Naive thymus-derived CD8-positive, alpha-beta T cell (primary cell): ENCODE measurements at regions of chr17 and their contacts with region 1.

Region 1: DNA sequence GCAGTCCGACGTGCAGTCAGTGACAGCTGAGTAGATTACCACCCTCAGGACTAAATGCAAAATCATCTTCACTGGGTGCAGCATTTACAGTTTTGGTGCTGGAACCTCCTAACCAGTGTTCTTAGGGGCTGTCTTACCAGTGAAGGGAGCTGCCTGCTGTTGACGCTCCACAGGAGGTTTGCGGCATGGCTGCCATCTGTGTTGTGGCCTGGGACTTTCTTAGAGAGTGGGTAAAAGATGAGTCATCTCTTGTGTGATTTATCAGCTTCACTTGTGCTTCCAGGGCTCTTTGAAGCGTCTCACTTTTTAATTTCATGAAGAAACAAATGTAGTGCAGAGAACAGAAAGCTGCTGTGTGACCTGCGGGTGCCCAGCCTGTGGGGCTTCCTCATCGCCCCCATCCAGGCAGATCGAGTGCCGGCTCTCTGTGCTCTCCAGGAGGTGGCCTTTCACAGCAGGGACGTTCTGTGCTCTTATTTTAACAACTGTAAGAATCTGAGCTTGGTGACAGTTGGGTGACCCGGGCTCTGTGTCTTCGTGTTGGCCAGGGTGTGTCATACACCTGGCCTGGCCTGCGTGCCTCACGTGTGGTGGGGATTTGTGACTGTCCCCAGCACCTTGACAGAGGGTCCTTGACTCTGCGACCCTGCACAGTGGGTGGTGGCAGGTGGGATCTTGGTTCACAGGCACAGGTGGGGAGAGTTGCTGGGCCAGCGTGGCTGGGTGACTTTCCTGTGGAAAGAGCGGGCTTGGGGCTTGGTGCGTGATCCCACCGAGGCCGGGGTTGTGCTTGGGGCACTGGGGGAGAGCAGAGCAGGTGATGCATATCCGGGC is 24.3 kb upstream of the ZNF750 start:
- DNase-seq: peak; percentile 62 to 97 (median 90)
- ATAC-seq: peak; percentile 92 to 95
- H3K4me3 Mint-ChIP-seq: peak overlapping the region; percentile 75 to 94 (median 83)
- H3K27ac Mint-ChIP-seq: peak overlapping the region; percentile 91 to 98 (median 96)
- H3K4me1 Mint-ChIP-seq: peaks cover 34 to 81% (median 65%) of the 10 kb centered on the region in 4 donors
- H3K27me3 Mint-ChIP-seq: no peaks in the 10 kb centered on the region

Region 2: GRCh38 chr17:82836823-82837357 is 27.3 kb before region 1 on chr17:
- POLR2A ChIA-PET with region 1: interaction called, 15 read pairs
- DNase-seq: peak in 1 of 10 donors; percentile 37
- ATAC-seq: no peak
- H3K4me3 Mint-ChIP-seq: no peak overlapping the region
- H3K27ac Mint-ChIP-seq: peak overlapping the region in 3 of 10 donors; percentile 4 to 82 (median 71)
- H3K4me1 Mint-ChIP-seq: peaks cover 0 to 16% (median 4%) of the 10 kb centered on the region in 4 donors
- H3K27me3 Mint-ChIP-seq: no peaks in the 10 kb centered on the region

Region 3: GRCh38 chr17:82876602-82877379 is 12.6 kb after region 1 on chr17:
- POLR2A ChIA-PET with region 1: interaction called, 84 read pairs
- DNase-seq: no peak
- ATAC-seq: no peak
- H3K4me3 Mint-ChIP-seq: no peak overlapping the region
- H3K27ac Mint-ChIP-seq: peak overlapping the region in 3 of 10 donors; percentile 29 to 60 (median 38)
- H3K4me1 Mint-ChIP-seq: peaks cover 22 to 64% (median 30%) of the 10 kb centered on the region in 4 donors
- H3K27me3 Mint-ChIP-seq: peaks cover 0 to 2% (median 0%) of the 10 kb centered on the region in 5 donors

Region 4: GRCh38 chr17:82881900-82882714 is 17.9 kb after region 1 on chr17:
- POLR2A ChIA-PET with region 1: interaction called, 84 read pairs
- DNase-seq: no peak
- ATAC-seq: no peak
- H3K4me3 Mint-ChIP-seq: peak overlapping the region; percentile 64 to 93 (median 86)
- H3K27ac Mint-ChIP-seq: peak overlapping the region; percentile 96 to 100 (median 99)
- H3K4me1 Mint-ChIP-seq: peaks cover 46 to 87% (median 78%) of the 10 kb centered on the region in 4 donors
- H3K27me3 Mint-ChIP-seq: peaks cover 0 to 2% (median 0%) of the 10 kb centered on the region in 5 donors

Region 5: DNA sequence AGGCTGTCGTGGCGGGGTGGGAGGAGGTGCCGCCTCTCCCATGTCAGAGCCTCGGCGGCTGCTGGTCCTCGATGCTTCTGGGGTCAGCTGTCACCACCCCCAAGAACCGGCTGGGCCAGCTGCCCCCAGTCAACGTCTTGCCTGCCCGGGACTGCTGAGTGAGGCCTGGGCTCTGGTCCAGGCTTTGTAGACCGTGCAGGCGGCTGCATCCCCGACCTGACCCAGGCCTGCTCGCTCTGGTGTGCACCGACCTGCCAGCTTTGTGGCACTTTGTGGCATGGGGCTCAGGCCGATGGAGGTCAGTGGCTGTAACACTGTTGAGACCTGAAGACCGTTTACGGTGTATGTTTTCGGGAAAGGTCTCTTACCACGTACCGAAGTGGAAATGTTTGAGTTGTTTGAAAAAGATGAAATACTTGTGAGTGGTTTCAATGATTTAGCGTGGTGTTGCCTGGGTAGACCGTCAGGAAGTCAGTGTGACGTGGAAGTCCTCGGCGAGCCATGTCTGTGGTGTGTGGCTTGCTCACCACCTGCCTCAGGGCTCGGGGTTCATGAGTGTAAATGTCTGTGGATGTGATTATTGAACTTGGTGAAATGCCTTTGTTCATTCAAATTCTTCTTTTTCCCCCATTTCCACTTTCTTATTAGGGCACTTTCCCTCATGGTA is 28.9 kb after region 1 on chr17:
- POLR2A ChIA-PET with region 1: interaction called, 19 read pairs
- DNase-seq: peak; percentile 42 to 93 (median 84)
- ATAC-seq: peak; percentile 99 to 100
- H3K4me3 Mint-ChIP-seq: peak overlapping the region; percentile 34 to 88 (median 80)
- H3K27ac Mint-ChIP-seq: peak overlapping the region; percentile 90 to 99 (median 96)
- H3K4me1 Mint-ChIP-seq: peaks cover 13 to 46% (median 28%) of the 10 kb centered on the region in 4 donors
- H3K27me3 Mint-ChIP-seq: no peaks in the 10 kb centered on the region

Region 6: DNA sequence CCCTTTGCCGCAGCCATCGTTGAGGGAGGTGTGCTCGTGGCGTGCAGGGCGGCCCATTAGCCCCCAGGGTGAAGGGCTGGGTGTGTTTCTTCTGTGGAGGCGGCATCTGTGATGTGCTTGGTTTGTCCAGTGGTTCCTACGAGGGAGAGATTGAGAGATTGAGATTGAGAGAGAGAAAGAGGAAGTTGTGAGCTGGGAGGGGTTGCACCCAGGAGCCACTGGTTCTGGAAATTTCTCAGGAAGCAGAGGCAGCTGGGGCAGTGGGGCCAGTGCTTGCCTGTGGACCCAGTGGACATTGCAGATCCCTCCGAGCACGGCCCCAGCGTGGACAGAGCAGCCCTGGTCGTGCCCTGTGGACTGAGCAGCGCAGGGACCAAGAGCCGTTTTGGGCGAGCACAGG is 47.7 kb after region 1 on chr17:
- POLR2A ChIA-PET with region 1: interaction called, 40 read pairs
- DNase-seq: no peak
- ATAC-seq: no peak
- H3K4me3 Mint-ChIP-seq: peak overlapping the region in 2 of 10 donors; percentile 24 to 55
- H3K27ac Mint-ChIP-seq: peak overlapping the region in 8 of 10 donors; percentile 1 to 75 (median 44)
- H3K4me1 Mint-ChIP-seq: peaks cover 16 to 55% (median 34%) of the 10 kb centered on the region in 4 donors
- H3K27me3 Mint-ChIP-seq: no peaks in the 10 kb centered on the region